ENCODE measurements at regions of chr12 and their contacts with region 1.

Region 1: DNA sequence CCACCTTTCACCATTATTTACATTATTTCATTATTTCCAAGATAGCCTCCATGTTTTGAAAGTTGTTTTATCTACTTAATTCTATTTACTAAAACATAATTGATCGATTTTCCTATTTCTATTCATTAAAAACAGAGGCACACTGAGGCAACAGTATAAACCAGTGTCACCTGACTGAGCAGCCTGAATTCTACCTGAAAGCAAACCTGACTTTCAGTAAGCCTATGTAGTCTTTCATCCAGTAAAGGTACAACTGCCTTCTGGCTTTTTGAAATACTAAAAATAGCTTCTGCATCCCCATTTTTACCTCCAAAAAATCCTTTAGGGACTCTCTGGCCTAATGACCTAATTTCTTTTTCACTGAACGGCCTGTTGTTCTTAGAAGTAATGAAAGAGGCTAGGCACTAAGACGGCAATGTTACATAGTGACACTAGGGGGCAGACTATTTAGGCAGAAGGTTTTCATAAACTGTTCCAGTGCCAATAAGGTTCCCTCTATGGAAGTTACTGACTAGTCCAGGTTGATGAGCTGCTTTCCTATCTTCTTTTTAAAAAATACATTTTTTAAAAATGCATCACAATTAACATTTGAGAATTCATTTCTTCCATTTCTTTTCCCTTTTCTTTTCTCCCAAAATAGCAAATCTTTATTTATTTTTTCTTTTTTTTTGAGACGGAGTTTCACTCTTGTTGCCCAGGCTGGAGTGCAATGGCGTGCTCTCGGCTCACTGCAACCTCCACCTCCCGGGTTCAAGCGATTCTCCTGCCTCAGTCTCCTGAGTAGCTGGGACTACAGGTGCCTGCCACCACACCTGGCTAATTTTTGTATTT is 17.5 kb downstream of the ANAPC5 start:
- DNase-seq: no peak
- H3K4me3 Mint-ChIP-seq: no peak overlapping the region
- H3K27ac Mint-ChIP-seq: no peak overlapping the region
- H3K4me1 Mint-ChIP-seq: peaks cover 4% of the 10 kb centered on the region
- H3K27me3 Mint-ChIP-seq: no peaks in the 10 kb centered on the region

Region 2: DNA sequence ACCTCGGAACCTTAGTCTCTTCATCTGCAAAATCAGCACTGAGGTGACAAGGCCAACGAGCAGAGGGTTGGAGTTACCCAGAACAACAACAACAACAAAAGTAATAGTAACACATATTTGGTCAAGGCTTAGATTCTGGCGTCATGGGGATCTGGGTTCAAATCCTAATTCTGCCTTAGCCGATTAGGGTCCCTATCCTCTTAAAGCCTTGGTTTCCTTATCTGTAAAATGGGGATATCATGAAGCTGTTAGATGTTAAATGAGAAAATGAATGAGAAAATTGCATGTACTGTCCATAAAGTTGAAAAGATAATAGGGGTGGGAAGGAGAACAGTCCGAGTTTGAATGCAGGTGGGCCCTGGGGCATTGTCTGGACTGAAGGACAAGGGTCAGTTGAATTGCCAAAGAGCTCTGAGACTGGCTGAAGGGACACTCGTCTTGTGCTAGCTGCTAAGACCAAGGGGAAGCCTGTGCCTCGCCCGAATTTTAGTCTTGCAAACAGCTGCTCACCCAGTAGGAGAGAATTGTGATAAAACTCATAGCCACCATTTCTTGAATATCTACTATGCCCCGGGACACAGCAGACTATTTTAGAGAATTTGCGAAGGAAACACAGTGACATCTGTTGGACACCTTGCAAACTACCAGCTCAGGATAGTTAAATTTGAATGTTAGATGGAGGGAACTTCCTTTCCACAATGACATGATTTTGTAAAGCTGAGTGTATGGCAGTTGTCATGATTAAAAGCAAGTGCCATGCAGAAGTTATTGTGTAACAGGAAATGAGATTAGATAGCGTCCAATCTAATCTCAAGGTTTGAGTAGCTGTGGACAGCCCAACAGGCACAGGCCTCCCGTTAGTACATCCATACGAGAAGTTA is 363.2 kb before region 1 on chr12:
- intact Hi-C with region 1: no loop called
- DNase-seq: peak; percentile 17
- H3K4me3 Mint-ChIP-seq: no peak overlapping the region
- H3K27ac Mint-ChIP-seq: no peak overlapping the region
- H3K4me1 Mint-ChIP-seq: peaks cover 7% of the 10 kb centered on the region
- H3K27me3 Mint-ChIP-seq: peaks cover 8% of the 10 kb centered on the region

Region 3: DNA sequence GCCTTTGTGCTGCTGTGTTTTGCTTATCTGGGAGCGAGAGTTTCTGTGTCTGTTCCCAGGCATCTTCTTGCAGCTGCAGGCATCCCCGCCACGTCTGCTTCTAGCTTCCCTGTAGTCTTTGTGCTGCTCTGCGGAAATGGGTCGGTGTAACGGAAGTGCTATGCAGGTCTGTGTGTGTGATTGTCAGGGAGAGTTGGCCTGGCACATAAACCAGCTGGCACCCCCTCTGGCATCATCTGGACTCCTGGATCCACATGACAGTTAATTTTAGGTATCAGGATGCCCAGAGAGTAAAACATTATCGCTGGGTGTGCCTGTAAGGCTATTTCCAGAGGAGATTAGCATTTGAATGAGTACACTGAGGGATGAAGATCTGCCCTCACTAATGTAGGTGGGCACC is 286.3 kb before region 1 on chr12:
- intact Hi-C with region 1: no loop called
- DNase-seq: no peak
- H3K4me3 Mint-ChIP-seq: peak overlapping the region; percentile 68
- H3K27ac Mint-ChIP-seq: peak overlapping the region; percentile 1
- H3K4me1 Mint-ChIP-seq: no peaks in the 10 kb centered on the region
- H3K27me3 Mint-ChIP-seq: peaks cover 18% of the 10 kb centered on the region

Region 4: GRCh38 chr12:121443193-121443870 is 108.6 kb after region 1 on chr12:
- intact Hi-C with region 1: loop called (anchors 1 kb)
- DNase-seq: peak; percentile 53
- H3K4me3 Mint-ChIP-seq: no peak overlapping the region
- H3K27ac Mint-ChIP-seq: no peak overlapping the region
- H3K4me1 Mint-ChIP-seq: no peaks in the 10 kb centered on the region
- H3K27me3 Mint-ChIP-seq: no peaks in the 10 kb centered on the region

Measured in activated T-helper 1 cell treated with anti-CD3 and anti-CD28 coated beads, Interleukin-12 subunit alpha, Interleukin-12 subunit beta, Interleukin-2, Interleukin-4 antibody, amounts not matched to agents 30 ng/mL and 10 ng/mL and 1 ng/mL, durations not matched to agents 14 hours and 24 hours and 36 hours (primary cell).